ENCODE measurements at regions of chr15 and their contacts with region 1.

Region 1: DNA sequence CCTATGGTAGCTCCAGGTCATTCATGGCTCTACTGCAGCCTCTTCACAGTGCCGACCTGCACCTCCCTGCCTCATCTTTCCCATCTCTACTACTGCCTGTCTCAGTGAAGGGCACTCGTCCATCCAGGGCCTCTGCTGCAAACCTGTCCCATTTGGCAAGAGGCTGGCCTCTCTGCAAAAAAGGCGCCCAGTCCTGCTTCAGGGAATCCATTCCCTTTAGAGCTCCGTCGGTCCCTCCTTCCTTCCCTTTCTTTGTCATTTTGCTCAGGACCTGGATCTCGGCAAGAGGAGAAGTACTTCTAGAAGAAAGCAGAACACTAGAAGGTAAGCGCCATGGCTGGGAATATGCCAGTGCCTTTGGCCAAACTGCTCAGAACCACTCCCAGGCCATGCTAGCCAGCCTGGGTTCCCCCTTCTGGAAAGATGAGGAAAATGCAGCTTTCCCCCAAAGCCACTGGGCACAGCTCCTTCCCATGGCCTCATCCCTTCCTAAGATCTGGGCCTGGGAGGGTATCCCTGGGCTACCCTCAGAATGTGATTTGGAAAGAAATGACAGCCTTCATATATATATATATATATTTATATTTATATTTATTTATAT is 6.4 kb upstream of the ISL2 start:
- DNase-seq: peak; percentile 58 to 73
- H3K4me3 ChIP-seq: no peak overlapping the region
- H3K4me3 Mint-ChIP-seq: no peak overlapping the region
- H3K27ac Mint-ChIP-seq: no peak overlapping the region
- H3K4me1 ChIP-seq: peaks cover 13% of the 10 kb centered on the region
- H3K4me1 Mint-ChIP-seq: peaks cover 18% of the 10 kb centered on the region
- H3K27me3 ChIP-seq: no peaks in the 10 kb centered on the region
- H3K27me3 Mint-ChIP-seq: no peaks in the 10 kb centered on the region
- CTCF ChIP-seq: peak; percentile 53 to 60

Region 2: GRCh38 chr15:76147906-76148553 is 182.2 kb before region 1 on chr15:
- CTCF ChIA-PET with region 1: interaction called, 3 read pairs
- POLR2A ChIA-PET with region 1: no interaction called
- intact Hi-C with region 1: loop called (anchors 5 kb)
- DNase-seq: peak; percentile 63 to 81
- H3K4me3 ChIP-seq: no peak overlapping the region
- H3K4me3 Mint-ChIP-seq: peak overlapping the region; percentile 62
- H3K27ac Mint-ChIP-seq: no peak overlapping the region
- H3K4me1 ChIP-seq: no peaks in the 10 kb centered on the region
- H3K4me1 Mint-ChIP-seq: peaks cover 15% of the 10 kb centered on the region
- H3K27me3 ChIP-seq: 0 out of 2 replicates have a peak, but pooled peaks cover 1% of the 10 kb centered on the region
- H3K27me3 Mint-ChIP-seq: peaks cover 14% of the 10 kb centered on the region
- CTCF ChIP-seq: peak; percentile 92 to 96

Measured in Caco-2 (cell line).